ENCODE measurements at regions of chr10 and their contacts with region 1.

Region 1: DNA sequence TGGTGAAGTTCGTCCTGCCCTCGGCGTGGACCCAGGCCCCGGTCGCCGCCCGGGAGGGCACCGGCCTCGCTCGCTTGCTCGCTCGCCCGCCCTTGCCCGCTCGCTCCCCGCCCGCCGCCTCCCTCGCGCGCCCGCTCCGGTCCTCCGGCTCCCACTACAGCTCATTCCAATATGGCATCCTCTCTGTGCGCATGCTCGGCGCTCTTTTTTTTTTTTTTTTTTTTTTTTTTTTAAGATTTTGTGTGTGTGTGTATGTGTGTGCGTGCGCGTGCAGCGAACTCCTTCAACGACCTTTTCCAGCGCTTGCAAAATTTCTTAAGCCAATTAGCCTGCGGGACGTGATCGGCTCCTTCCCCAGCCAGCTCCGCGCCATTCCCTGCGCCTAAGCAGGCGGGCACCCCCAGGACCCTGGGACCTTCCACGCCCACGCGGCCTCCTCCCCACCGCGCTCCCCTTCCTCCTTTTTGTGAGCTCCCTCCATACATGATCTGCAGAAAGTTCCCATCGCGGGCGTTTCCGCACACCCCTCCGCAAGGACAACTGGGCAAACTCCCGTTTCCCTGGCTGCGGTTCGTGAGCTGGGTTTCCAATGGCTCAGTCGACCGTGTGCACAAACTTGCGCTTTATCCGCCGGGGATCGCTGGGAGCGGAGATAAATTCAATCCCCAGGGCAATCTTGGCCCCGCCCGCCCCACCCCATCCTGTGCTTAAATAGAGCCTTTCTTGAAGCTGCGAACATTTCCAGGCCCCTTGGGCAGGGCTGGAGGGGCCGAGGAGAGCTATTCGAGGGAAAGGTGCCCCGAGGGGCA is at the start of gene SFMBT2:
- DNase-seq: peak; percentile 75
- H3K4me3 Mint-ChIP-seq: peak within 1 kb of the TSS; percentile 93
- H3K27ac Mint-ChIP-seq: peak within 1 kb of the TSS; percentile 74
- H3K4me1 Mint-ChIP-seq: peaks cover 25% of the 10 kb centered on the region
- H3K27me3 Mint-ChIP-seq: peaks cover 10% of the 10 kb centered on the region
- total RNA-seq, gene SFMBT2: 12.8 to 15.4 TPM

Region 2: DNA sequence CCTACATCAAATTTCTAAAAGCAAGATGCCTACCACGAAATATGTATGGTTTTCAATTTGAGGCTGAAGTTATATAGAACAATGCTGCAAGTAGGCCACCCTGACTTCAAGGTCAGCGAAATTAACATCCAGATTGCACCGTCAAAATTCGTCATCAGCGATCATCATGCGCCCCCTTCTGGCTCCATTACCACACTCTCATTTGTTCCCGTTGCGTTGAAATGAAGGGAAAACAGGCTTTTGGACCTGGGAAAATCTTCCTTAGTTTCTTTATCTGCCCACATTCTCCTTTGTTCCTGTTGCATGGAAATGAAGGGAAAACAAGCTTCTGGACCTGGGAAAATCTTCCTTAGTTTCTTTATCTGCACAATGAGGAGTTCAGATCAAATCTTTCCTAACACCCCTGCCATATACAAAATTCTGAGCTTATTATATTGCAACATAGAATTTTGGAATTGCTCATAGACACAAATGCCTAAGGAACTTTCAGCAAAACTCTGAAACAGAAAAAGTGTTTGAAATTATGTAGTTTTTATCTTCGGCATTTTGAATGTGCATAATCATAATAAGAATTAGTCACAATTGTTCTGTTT is 732.8 kb before region 1 on chr10:
- CTCF ChIA-PET with region 1: no interaction called
- POLR2A ChIA-PET with region 1: no interaction called
- intact Hi-C with region 1: loop called (anchors 10 kb)
- DNase-seq: peak; percentile 76
- H3K4me3 Mint-ChIP-seq: no peak overlapping the region
- H3K27ac Mint-ChIP-seq: no peak overlapping the region
- H3K4me1 Mint-ChIP-seq: peaks cover 4% of the 10 kb centered on the region
- H3K27me3 Mint-ChIP-seq: peaks cover 6% of the 10 kb centered on the region

Region 3: DNA sequence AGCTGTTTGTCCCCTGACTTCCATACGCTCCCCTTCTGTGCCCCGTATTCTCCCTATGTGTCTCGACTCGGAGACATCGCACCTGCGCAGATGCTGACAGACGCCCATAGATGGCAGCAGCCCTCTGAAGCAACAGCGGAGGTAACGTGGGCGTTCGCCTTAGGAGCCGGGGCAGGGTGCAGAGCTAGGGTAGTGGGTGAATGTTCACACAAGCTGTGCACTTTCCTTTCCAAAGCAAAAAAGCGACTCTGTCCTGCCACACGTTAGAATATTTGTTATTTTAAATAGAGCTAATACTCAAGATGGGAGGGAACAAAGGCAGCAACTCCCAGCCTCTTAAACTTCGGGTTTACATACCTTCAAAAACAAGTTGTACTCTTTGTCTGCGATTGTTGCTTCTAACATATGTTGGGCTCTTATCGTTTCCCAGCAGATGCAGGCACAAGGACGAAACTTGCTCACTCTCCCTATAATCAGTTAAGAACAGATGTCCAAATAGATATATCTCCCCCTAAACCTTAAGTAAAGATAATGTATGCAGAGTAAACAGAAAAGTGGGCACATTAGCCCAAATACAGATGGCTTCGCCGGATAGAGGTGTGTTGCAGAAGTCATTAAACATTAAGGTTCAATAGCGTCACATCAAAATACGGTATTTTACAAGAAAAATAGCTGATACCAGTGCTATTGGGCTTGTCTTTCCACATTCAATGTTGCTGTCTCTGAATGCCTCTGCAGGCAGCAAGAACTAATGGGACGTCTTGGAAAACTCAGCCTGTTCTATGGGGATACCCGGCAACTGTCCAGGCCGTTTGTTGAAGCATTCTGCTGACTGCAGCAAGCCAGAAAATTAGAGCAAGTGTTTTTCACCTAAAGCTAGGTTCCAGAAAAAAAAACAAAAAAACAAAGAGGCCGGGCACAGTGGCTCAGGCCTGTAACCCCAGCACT is 490.7 kb before region 1 on chr10:
- CTCF ChIA-PET with region 1: interaction called, 99 read pairs
- POLR2A ChIA-PET with region 1: no interaction called
- intact Hi-C with region 1: loop called (anchors 2 kb)
- DNase-seq: peak; percentile 87
- H3K4me3 Mint-ChIP-seq: no peak overlapping the region
- H3K27ac Mint-ChIP-seq: no peak overlapping the region
- H3K4me1 Mint-ChIP-seq: peaks cover 10% of the 10 kb centered on the region
- H3K27me3 Mint-ChIP-seq: no peaks in the 10 kb centered on the region

Region 4: GRCh38 chr10:7121154-7121810 is 289.8 kb before region 1 on chr10:
- CTCF ChIA-PET with region 1: interaction called, 35 read pairs
- POLR2A ChIA-PET with region 1: interaction called, 3 read pairs
- intact Hi-C with region 1: loop called (anchors 2 kb)
- DNase-seq: peak; percentile 77
- H3K4me3 Mint-ChIP-seq: no peak overlapping the region
- H3K27ac Mint-ChIP-seq: no peak overlapping the region
- H3K4me1 Mint-ChIP-seq: peaks cover 3% of the 10 kb centered on the region
- H3K27me3 Mint-ChIP-seq: peaks cover 10% of the 10 kb centered on the region

Region 5: GRCh38 chr10:7192831-7193361 is 218.2 kb before region 1 on chr10:
- CTCF ChIA-PET with region 1: interaction called, 3 read pairs
- POLR2A ChIA-PET with region 1: interaction called, 6 read pairs
- intact Hi-C with region 1: loop called (anchors 2 kb)
- DNase-seq: peak; percentile 77
- H3K4me3 Mint-ChIP-seq: peak overlapping the region; percentile 61
- H3K27ac Mint-ChIP-seq: peak overlapping the region; percentile 95
- H3K4me1 Mint-ChIP-seq: peaks cover 54% of the 10 kb centered on the region
- H3K27me3 Mint-ChIP-seq: no peaks in the 10 kb centered on the region

Region 6: DNA sequence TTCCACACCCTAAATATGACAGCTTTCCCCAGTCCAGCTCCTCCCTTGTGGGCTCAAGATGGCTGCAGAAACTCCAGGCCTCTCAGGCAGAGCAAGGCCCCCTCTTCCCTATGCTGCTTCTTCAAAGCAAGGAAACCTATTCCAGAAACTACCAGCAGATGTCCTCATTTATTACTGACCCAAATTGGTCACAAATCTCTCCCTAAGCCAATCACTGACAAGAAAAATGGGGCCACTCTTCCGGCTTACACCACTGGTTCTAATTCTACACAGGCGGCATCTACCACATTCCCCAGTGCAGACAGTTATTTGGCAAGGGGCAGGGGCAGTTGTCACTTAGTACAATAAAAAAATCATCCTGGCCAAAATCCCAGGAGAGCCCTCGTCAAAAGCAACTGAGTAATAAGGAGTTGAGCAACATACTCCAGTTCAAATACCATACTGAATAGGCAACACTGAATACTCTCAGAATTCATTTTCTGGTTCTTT is 150.6 kb before region 1 on chr10:
- CTCF ChIA-PET with region 1: interaction called, 13 read pairs
- POLR2A ChIA-PET with region 1: interaction called, 5 read pairs
- intact Hi-C with region 1: loop called (anchors 1 kb)
- DNase-seq: no peak
- H3K4me3 Mint-ChIP-seq: no peak overlapping the region
- H3K27ac Mint-ChIP-seq: peak overlapping the region; percentile 26
- H3K4me1 Mint-ChIP-seq: peaks cover 57% of the 10 kb centered on the region
- H3K27me3 Mint-ChIP-seq: no peaks in the 10 kb centered on the region

Region 7: GRCh38 chr10:7484456-7485243 is 73.6 kb after region 1 on chr10:
- CTCF ChIA-PET with region 1: no interaction called
- POLR2A ChIA-PET with region 1: no interaction called
- intact Hi-C with region 1: loop called (anchors 5 kb)
- DNase-seq: peak; percentile 69
- H3K4me3 Mint-ChIP-seq: peak overlapping the region; percentile 56
- H3K27ac Mint-ChIP-seq: peak overlapping the region; percentile 73
- H3K4me1 Mint-ChIP-seq: peaks cover 62% of the 10 kb centered on the region
- H3K27me3 Mint-ChIP-seq: no peaks in the 10 kb centered on the region

Measured in activated CD4-positive, alpha-beta memory T cell treated with anti-CD3 and anti-CD28 coated beads for 36 hours (primary cell).